Activated B cell treated with CpG ODN at 0.5 μM for 24 hours (primary cell): ENCODE measurements at regions of chr4 and their contacts with region 1.

Region 1: DNA sequence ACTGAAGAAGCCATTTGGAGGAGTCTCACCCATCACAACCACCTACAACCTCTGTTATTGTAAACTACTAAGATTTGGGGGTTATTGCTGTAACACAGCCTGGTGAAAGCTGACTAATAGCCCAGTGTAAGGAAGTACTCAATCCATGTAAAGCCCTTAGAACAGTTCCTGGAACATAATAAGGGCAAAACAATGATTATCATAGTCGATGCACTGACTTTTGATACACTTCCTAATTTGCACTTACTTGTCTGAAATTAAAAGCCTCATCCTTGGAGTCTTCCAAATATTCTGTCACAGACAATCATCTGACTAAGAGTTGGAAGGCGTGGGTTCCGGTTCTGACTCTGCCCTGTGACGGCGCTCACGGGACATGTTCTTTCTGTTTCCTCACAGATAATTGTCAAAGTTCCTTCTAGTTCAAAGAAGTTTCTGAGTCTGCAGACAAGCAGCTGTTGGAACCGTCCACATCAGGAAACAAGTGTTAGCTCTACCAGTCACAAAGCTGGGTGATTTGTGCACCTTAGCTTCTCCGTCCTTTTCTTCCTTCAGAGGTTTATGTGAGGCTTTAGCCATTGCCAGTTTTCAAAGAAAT is 33.4 kb upstream of the RASGEF1B start:
- DNase-seq: no peak
- ATAC-seq: peak; percentile 56
- H3K4me3 Mint-ChIP-seq: peak overlapping the region; percentile 71
- H3K27ac Mint-ChIP-seq: peak overlapping the region; percentile 92
- H3K4me1 Mint-ChIP-seq: peaks cover 86% of the 10 kb centered on the region
- H3K27me3 Mint-ChIP-seq: no peaks in the 10 kb centered on the region
- CTCF ChIP-seq: no peak

Region 2: DNA sequence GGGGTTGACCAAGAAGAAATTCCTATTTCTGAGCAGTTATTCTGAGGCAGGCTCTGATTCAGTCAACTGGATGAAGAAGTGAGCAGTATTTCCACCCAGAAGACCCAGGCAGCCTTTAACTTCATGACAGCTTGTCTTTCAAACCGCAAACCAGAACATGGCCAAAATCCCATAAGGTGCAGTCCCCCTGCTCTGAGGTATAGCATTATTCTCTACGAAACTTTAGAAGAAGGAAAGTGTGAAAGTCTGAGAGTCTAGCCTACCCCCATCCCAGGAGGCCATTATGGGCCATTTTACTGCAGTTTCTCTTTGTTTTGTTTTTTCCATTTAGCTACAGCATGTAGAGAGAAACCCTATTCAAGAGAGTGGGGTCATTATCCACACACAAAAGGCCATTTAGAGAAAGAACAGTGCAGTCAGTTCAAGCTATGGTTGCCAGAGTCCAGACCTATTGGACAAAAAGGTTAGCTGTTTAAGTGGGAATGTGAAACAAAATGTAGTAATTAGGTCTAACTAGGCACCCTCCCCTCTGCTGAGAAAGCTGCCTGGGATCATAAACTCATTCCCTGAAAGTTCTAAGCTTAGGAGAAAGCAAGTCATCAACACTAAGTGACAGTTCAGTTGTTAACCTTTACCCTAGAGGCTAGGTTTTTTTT is 18.7 kb after region 1 on chr4:
- CTCF ChIA-PET with region 1: no interaction called
- POLR2A ChIA-PET with region 1: interaction called, 6 read pairs
- intact Hi-C with region 1: loop called (anchors 2 kb)
- DNase-seq: no peak
- ATAC-seq: peak; percentile 49
- H3K4me3 Mint-ChIP-seq: no peak overlapping the region
- H3K27ac Mint-ChIP-seq: no peak overlapping the region
- H3K4me1 Mint-ChIP-seq: peaks cover 24% of the 10 kb centered on the region
- H3K27me3 Mint-ChIP-seq: no peaks in the 10 kb centered on the region
- CTCF ChIP-seq: no peak

Region 3: GRCh38 chr4:81531428-81531827 is 26.3 kb after region 1 on chr4:
- CTCF ChIA-PET with region 1: no interaction called
- POLR2A ChIA-PET with region 1: no interaction called
- intact Hi-C with region 1: loop called (anchors 2 kb)
- DNase-seq: no peak
- ATAC-seq: no peak
- H3K4me3 Mint-ChIP-seq: no peak overlapping the region
- H3K27ac Mint-ChIP-seq: no peak overlapping the region
- H3K4me1 Mint-ChIP-seq: no peaks in the 10 kb centered on the region
- H3K27me3 Mint-ChIP-seq: no peaks in the 10 kb centered on the region
- CTCF ChIP-seq: no peak

Region 4: DNA sequence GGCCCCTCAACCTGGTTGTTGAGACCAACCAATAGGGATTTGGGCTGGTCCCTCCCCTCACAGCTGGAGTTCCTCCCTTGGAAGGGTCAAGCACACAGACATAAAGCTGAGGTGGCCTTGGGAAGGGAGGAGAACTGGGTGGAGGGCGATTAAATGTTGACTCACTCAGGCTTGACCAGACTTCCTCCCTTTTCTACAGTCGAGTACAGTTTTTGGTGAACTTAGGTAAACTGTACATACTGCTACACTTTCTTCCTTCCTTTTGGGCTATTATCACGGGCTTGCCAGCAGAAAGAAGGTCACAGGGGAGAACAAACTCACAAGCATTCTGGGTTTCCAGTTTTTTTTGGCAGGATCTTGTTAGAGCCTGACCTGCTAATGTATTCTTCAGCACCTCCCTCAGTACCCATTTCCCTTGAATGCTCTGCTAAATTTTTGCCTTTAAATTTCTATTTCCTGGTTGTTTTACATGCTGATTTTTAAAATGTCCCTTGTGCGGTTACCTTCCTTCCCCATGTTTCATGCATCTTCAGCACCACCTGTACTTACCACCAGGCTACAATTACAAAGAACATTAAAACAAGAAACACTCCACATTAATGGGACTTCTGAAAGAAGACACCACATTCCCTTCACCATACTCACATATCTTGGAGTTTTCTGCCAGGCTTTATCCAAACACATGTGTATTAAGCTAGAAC is 101.8 kb after region 1 on chr4:
- CTCF ChIA-PET with region 1: interaction called, 3 read pairs
- POLR2A ChIA-PET with region 1: no interaction called
- intact Hi-C with region 1: loop called (anchors 5 kb)
- DNase-seq: no peak
- ATAC-seq: peak; percentile 54
- H3K4me3 Mint-ChIP-seq: peak overlapping the region; percentile 55
- H3K27ac Mint-ChIP-seq: peak overlapping the region; percentile 86
- H3K4me1 Mint-ChIP-seq: peaks cover 58% of the 10 kb centered on the region
- H3K27me3 Mint-ChIP-seq: no peaks in the 10 kb centered on the region
- CTCF ChIP-seq: no peak

Region 5: DNA sequence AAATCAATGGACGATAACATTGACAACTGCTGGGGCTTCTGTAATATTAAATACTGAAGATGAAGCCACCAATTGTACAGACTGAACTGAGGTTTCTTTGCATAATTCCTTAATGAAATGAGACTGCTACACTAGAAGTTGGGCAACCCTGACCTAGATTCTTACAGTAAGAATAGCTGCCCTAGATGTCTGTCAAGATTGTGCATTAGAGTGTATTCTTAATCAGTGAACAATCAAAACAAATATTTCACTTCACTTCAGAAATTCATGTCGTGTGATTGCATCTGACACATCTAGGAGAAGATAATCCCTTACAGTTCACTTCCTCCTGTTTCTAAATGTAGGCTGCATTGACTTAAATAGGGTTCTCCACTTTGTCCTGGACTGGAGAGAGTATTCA is 585.6 kb after region 1 on chr4:
- CTCF ChIA-PET with region 1: no interaction called
- POLR2A ChIA-PET with region 1: no interaction called
- intact Hi-C with region 1: no loop called
- DNase-seq: no peak
- ATAC-seq: no peak
- H3K4me3 Mint-ChIP-seq: no peak overlapping the region
- H3K27ac Mint-ChIP-seq: no peak overlapping the region
- H3K4me1 Mint-ChIP-seq: no peaks in the 10 kb centered on the region
- H3K27me3 Mint-ChIP-seq: peaks cover 1% of the 10 kb centered on the region
- CTCF ChIP-seq: no peak